ENCODE measurements at regions of chr18 and their contacts with region 1.

Region 1: GRCh38 chr18:22241921-22242361 is 72.6 kb downstream of the GATA6 start:
- DNase-seq: no peak
- ATAC-seq: no peak
- H3K4me3 Mint-ChIP-seq: no peak overlapping the region
- H3K27ac Mint-ChIP-seq: no peak overlapping the region
- H3K4me1 Mint-ChIP-seq: no peaks in the 10 kb centered on the region
- H3K27me3 Mint-ChIP-seq: no peaks in the 10 kb centered on the region

Region 2: DNA sequence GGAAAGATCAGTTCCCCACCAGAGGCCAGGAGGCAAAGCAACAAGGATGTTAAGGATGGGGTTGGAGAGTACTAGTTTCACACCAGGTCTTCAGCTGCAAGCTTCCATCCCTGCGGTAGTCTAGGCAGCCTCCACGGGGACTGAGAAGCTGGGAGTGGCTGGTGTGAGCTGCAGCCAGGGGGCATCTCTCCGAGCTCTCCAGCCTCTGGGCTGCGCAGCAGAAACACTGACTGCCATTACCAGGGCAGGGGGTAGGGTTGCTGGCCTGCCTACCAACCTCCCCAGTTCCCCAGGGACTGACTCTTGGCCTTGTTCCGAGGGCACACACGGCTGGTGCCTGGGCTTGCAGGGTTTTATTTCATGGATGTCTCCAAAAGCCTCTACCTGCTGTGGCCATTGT is 56.7 kb before region 1 on chr18:
- CTCF ChIA-PET with region 1: no interaction called
- POLR2A ChIA-PET with region 1: no interaction called
- intact Hi-C with region 1: loop called in 1 of 2 experiments (anchors 10 kb)
- DNase-seq: no peak
- ATAC-seq: no peak
- H3K4me3 Mint-ChIP-seq: no peak overlapping the region
- H3K27ac Mint-ChIP-seq: no peak overlapping the region
- H3K4me1 Mint-ChIP-seq: no peaks in the 10 kb centered on the region
- H3K27me3 Mint-ChIP-seq: peaks cover 4% of the 10 kb centered on the region

Measured in activated CD4-positive, alpha-beta T cell treated with anti-CD3 and anti-CD28 coated beads for 36 hours (primary cell).